Activated CD4-positive, alpha-beta memory T cell treated with anti-CD3 and anti-CD28 coated beads for 36 hours (primary cell): ENCODE measurements at regions of chr2 and their contacts with region 1.

Region 1: DNA sequence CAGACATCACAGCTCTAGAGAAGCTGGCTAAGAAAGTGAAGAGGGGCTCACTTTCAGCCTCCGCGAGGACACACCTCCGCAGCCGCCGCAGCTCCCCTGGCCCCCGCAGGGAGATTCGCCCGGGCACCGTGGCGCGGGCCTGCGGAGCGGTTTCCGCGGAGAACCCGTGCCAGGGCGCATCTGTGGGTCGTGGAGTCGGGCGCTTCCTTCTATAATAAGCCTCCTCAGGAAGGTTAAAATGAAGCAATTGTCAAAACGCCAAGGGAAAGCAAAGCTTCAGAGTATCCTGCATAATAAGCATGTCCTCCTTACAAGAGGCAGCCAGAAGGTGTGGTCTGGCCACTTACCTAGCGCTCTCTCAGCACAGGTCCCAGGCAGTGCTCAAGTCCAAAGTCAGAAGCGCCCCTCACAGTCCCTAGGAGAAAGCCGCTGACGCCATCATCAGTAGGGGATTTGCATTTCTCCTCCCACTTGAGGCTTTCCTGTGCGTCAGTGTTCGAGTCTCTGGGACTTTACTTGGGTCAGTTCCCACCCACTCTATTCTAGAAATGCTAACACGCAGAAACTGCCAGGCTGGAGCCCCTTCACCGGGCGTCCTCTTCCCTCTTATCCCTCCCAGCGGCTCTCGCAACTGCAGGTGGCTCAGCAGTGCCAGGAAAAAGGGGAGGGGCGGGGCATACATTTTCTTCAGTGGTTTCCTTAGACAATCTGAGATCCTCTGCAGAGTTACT is at the start of gene STAT4:
- DNase-seq: peak; percentile 93
- H3K4me3 Mint-ChIP-seq: peak within 1 kb of the TSS; percentile 96
- H3K27ac Mint-ChIP-seq: peak within 1 kb of the TSS; percentile 95
- H3K4me1 Mint-ChIP-seq: peaks cover 64% of the 10 kb centered on the region
- H3K27me3 Mint-ChIP-seq: no peaks in the 10 kb centered on the region
- total RNA-seq, gene STAT4: 52.4 to 52.6 TPM

Region 2: GRCh38 chr2:190781604-190782198 is 369.1 kb before region 1 on chr2:
- CTCF ChIA-PET with region 1: interaction called, 4 read pairs
- POLR2A ChIA-PET with region 1: interaction called, 4 read pairs
- intact Hi-C with region 1: loop called (anchors 1 kb)
- DNase-seq: peak; percentile 66
- H3K4me3 Mint-ChIP-seq: no peak overlapping the region
- H3K27ac Mint-ChIP-seq: no peak overlapping the region
- H3K4me1 Mint-ChIP-seq: peaks cover 22% of the 10 kb centered on the region
- H3K27me3 Mint-ChIP-seq: peaks cover 9% of the 10 kb centered on the region

Region 3: DNA sequence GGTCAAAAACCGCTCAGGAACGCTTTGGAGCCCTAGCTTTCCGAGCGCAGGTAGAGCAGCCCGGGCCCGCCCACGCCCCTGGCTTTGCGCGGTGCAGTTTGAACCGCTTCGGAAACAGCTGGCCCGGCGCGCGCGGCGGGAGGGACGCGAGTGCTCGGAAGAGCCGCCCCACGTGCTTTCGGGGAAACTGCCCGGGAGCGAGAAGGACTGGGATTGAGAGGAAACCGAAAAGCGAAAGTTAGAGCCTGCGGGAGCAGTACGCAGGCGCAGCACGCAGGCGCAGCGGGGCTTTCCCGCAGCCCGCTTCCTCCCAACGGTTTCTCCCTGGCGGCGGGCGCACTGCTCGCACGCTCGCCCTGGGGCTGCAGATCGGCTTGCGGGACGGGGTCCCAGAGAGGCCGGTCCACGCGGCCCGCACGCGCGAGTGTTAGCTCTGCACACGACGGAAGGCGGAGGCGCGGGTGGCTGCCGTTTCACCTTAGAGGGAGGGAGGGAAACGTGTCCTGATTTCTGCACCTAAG is 130.5 kb before region 1 on chr2:
- CTCF ChIA-PET with region 1: interaction called, 7 read pairs
- POLR2A ChIA-PET with region 1: interaction called, 6 read pairs
- intact Hi-C with region 1: loop called (anchors 1 kb)
- DNase-seq: peak; percentile 97
- H3K4me3 Mint-ChIP-seq: no peak overlapping the region
- H3K27ac Mint-ChIP-seq: no peak overlapping the region
- H3K4me1 Mint-ChIP-seq: peaks cover 34% of the 10 kb centered on the region
- H3K27me3 Mint-ChIP-seq: peaks cover 2% of the 10 kb centered on the region

Region 4: DNA sequence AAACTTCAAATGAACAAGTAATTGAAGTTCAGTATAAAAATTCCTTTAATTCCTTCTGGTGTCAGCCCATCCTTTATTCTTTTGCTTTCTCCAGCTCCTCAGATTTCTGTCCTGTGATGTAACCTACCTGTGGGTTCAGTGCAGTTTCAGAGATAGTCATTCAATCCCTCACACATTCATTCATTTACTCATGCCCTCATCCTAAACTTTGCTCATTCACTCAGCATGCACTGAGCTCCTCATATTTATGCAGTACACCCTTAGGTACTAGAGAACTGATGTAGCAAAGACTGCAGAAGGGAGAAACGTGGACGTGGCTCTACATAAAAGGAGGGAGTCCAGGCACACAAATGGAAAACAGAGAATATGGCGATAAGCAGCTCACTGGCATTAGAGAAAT is 91.5 kb before region 1 on chr2:
- CTCF ChIA-PET with region 1: interaction called, 412 read pairs
- POLR2A ChIA-PET with region 1: interaction called, 11 read pairs
- intact Hi-C with region 1: loop called (anchors 1 kb)
- DNase-seq: no peak
- H3K4me3 Mint-ChIP-seq: no peak overlapping the region
- H3K27ac Mint-ChIP-seq: peak overlapping the region; percentile 10
- H3K4me1 Mint-ChIP-seq: peaks cover 68% of the 10 kb centered on the region
- H3K27me3 Mint-ChIP-seq: no peaks in the 10 kb centered on the region

Region 5: DNA sequence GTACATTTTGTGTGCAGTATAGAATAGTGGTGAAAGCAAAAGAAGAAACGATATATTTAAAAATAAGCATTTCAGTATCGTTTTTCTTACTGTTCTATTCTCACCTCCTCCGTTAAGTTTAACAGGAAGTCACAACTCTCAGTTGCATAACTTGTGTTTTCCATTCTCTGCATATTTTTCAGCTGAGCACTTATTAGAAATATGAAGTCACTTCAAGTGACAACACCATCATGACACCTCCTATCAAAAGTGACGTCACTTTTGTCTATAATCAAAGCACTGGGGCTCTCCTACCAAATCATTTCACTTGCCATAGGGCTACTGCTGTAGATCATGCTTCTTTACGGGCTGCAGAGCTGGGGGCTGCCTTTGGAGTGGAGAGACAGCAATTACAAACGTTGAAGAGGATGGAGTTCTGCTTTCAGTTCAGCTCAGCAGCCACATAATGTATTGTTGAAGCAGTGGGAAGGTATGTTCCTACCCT is 36.3 kb before region 1 on chr2:
- CTCF ChIA-PET with region 1: interaction called, 21 read pairs
- POLR2A ChIA-PET with region 1: interaction called, 17 read pairs
- intact Hi-C with region 1: loop called (anchors 1 kb)
- DNase-seq: peak; percentile 57
- H3K4me3 Mint-ChIP-seq: peak overlapping the region; percentile 66
- H3K27ac Mint-ChIP-seq: peak overlapping the region; percentile 88
- H3K4me1 Mint-ChIP-seq: peaks cover 70% of the 10 kb centered on the region
- H3K27me3 Mint-ChIP-seq: no peaks in the 10 kb centered on the region

Region 6: GRCh38 chr2:191171708-191172355 is 21.1 kb after region 1 on chr2:
- CTCF ChIA-PET with region 1: interaction called, 13 read pairs
- POLR2A ChIA-PET with region 1: no interaction called
- intact Hi-C with region 1: no loop called
- DNase-seq: no peak
- H3K4me3 Mint-ChIP-seq: no peak overlapping the region
- H3K27ac Mint-ChIP-seq: peak overlapping the region; percentile 16
- H3K4me1 Mint-ChIP-seq: peaks cover 58% of the 10 kb centered on the region
- H3K27me3 Mint-ChIP-seq: no peaks in the 10 kb centered on the region

Region 7: DNA sequence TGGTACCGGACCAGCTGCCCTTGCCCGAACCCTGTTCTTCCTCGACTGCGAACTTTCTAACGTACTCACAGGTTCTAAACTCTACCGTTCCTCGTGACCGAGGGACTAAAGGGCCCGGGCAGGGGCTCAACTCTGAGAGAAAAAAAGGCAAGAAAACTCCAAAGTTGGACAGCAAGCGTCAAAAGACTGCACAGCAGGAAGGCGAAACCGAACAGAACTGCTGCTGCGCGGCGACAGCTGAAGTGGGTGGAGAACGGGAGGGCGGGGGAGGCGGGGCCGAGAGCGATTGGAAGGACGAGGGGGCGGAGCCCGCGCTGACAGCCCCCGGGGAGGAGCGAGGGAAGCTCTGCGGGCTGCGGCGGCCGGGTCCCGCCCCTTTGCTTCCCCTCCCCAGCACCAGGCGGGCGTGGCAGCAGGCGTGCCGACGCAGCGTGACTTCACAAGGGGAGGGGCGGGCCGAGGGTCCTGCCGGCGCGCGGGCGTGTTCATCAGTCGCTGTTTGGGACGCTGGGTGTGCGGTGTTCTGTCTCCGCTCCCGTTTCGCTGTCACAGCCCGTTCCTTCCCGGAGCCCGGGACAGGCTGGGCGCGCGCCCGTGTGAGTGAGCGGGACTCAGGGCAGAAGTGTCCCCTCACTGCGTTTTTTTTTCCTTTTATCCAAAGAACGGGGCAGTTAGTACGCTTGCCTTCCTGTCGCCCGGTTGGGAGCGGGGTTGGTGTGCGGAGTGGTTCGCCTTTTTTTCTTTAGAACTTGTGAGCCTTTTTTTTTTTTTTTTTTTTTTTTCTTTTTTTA is 527.1 kb after region 1 on chr2 and contains the start of gene NABP1:
- CTCF ChIA-PET with region 1: no interaction called
- POLR2A ChIA-PET with region 1: interaction called, 7 read pairs
- intact Hi-C with region 1: loop called (anchors 1 kb)
- DNase-seq: peak; percentile 99
- H3K4me3 Mint-ChIP-seq: peak within 1 kb of the TSS; percentile 96
- H3K27ac Mint-ChIP-seq: peak within 1 kb of the TSS; percentile 99
- H3K4me1 Mint-ChIP-seq: peaks cover 46% of the 10 kb centered on the region
- H3K27me3 Mint-ChIP-seq: peaks cover 2% of the 10 kb centered on the region
- total RNA-seq, gene NABP1: 65.1 to 65.4 TPM